Heart left ventricle (tissue), 16 donors: ENCODE measurements at regions of chr2 and their contacts with region 1.

Region 1: GRCh38 chr2:202033321-202034248 is at the start of gene FZD7:
- DNase-seq: peak; percentile 94 to 96 (median 94)
- ATAC-seq: peak; percentile 90 to 94 (median 91)
- H3K4me3 ChIP-seq: peak within 1 kb of the TSS; percentile 52 to 90 (median 79)
- H3K27ac ChIP-seq: peak within 1 kb of the TSS; percentile 89 to 99 (median 95)
- H3K4me1 ChIP-seq: peaks cover 0 to 37% (median 17%) of the 10 kb centered on the region in 12 donors
- H3K27me3 ChIP-seq: peaks cover 0 to 52% (median 5%) of the 10 kb centered on the region in 9 donors
- CTCF ChIP-seq: peak in 3 of 12 donors; percentile 18 to 35 (median 19)
- POLR2A ChIP-seq: peak; percentile 53 to 83
- total RNA-seq, gene FZD7: 11.3 to 42.0 (median 25.5) TPM

Region 2: GRCh38 chr2:201795607-201796477 is 237.7 kb before region 1 on chr2:
- intact Hi-C with region 1: loop called in 1 of 10 experiments (anchors 5 kb)
- DNase-seq: peak in 1 of 5 donors; percentile 18
- ATAC-seq: peak in 3 of 4 donors; percentile 61 to 69 (median 64)
- H3K4me3 ChIP-seq: no peak overlapping the region
- H3K27ac ChIP-seq: no peak overlapping the region
- H3K4me1 ChIP-seq: no peaks in the 10 kb centered on the region
- H3K27me3 ChIP-seq: peaks cover 0 to 3% (median 0%) of the 10 kb centered on the region in 9 donors
- CTCF ChIP-seq: peak; percentile 41 to 72 (median 62)
- POLR2A ChIP-seq: no peak

Region 3: GRCh38 chr2:201882353-201883090 is 151.1 kb before region 1 on chr2:
- intact Hi-C with region 1: loop called in 4 of 10 experiments (anchors 2 to 10 kb)
- DNase-seq: peak; percentile 28 to 61 (median 45)
- ATAC-seq: peak in 2 of 4 donors; percentile 8 to 16
- H3K4me3 ChIP-seq: no peak overlapping the region
- H3K27ac ChIP-seq: no peak overlapping the region
- H3K4me1 ChIP-seq: peaks cover 10 to 42% (median 23%) of the 10 kb centered on the region in 12 donors
- H3K27me3 ChIP-seq: peaks cover 0 to 11% (median 0%) of the 10 kb centered on the region in 9 donors
- CTCF ChIP-seq: no peak
- POLR2A ChIP-seq: no peak

Region 4: DNA sequence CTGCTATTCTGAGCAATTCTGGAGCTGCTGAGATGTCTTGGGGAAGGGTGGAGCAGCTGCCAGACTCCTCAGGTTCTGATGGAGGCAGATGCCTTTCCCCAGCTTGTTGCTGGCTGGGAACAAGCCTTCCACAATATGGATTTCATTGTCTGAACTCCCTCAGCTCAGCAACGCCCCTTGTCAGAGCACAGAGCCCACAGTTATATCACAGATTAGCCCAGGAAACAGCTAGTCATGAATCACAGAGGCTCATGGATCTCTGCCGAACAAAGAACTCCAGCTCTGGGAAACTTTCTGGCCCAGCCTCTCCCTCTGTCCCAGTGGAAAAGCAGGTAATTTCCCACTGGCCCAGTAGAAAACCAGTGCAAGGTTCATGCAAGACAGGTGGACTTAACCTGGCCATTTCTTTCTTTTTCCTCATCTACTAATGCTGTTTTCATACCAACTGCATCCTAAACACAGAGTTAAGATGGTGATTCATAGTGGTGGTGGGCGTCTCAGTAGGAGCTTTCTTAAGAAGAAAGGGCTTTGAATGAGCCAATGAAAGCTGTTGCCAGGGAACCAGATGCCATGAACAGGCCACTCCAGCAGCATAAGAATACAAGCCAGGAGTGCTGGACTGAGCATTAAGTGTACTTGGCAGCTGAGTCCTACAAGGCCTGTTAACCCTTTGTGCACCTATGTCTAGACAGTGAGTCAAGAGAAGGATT is 30.7 kb after region 1 on chr2:
- intact Hi-C with region 1: no loop called
- DNase-seq: peak in 3 of 5 donors; percentile 20 to 52 (median 34)
- ATAC-seq: peak; percentile 32 to 92 (median 80)
- H3K4me3 ChIP-seq: no peak overlapping the region
- H3K27ac ChIP-seq: peak overlapping the region in 3 of 12 donors; percentile 5 to 40 (median 28)
- H3K4me1 ChIP-seq: peaks cover 0 to 12% (median 5%) of the 10 kb centered on the region in 12 donors
- H3K27me3 ChIP-seq: no peaks in the 10 kb centered on the region
- CTCF ChIP-seq: no peak
- POLR2A ChIP-seq: no peak

Region 5: DNA sequence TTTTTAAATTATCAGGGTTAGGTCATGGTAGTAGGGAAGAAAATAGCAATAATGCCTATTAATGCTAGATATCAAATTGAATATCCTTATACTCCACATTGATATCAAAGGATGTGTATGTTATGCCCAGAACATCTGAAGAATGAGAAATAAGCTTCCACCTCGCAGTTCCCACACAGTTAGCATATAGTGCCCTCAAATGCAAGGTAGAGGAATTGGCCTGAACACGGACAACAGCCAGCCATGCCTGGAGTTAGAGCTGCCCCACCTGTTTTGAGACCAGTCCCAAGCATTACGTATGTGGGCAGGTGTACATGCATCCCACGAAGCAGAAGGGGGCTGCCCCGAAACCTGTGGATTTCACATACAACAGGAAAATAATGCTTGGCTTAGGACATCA is 125.2 kb after region 1 on chr2:
- intact Hi-C with region 1: loop called in 2 of 10 experiments (anchors 5 to 10 kb)
- DNase-seq: no peak
- ATAC-seq: peak in 3 of 4 donors; percentile 48 to 61 (median 52)
- H3K4me3 ChIP-seq: no peak overlapping the region
- H3K27ac ChIP-seq: no peak overlapping the region
- H3K4me1 ChIP-seq: peaks cover 0 to 12% (median 5%) of the 10 kb centered on the region in 12 donors
- H3K27me3 ChIP-seq: no peaks in the 10 kb centered on the region
- CTCF ChIP-seq: peak in 7 of 12 donors; percentile 21 to 43 (median 32)
- POLR2A ChIP-seq: no peak

Region 6: GRCh38 chr2:202178342-202178958 is 144.9 kb after region 1 on chr2:
- intact Hi-C with region 1: loop called in 7 of 10 experiments (anchors 2 to 10 kb)
- DNase-seq: peak in 2 of 5 donors; percentile 35 to 40
- ATAC-seq: peak; percentile 51 to 82 (median 77)
- H3K4me3 ChIP-seq: no peak overlapping the region
- H3K27ac ChIP-seq: no peak overlapping the region
- H3K4me1 ChIP-seq: no peaks in the 10 kb centered on the region
- H3K27me3 ChIP-seq: no peaks in the 10 kb centered on the region
- CTCF ChIP-seq: peak; percentile 68 to 91 (median 82)
- POLR2A ChIP-seq: no peak